Naive thymus-derived CD4-positive, alpha-beta T cell (primary cell): ENCODE measurements at regions of chr3 and their contacts with region 1.

Region 1: GRCh38 chr3:69161587-69162307 is 39.4 kb upstream of the LMOD3 start:
- DNase-seq: peak in 7 of 9 donors; percentile 22 to 62 (median 55)
- ATAC-seq: peak; percentile 84
- H3K4me3 ChIP-seq: no peak overlapping the region
- H3K4me3 Mint-ChIP-seq: no peak overlapping the region
- H3K27ac ChIP-seq: no peak overlapping the region
- H3K27ac Mint-ChIP-seq: no peak overlapping the region
- H3K4me1 ChIP-seq: no peaks in the 10 kb centered on the region
- H3K4me1 Mint-ChIP-seq: peaks cover 0 to 15% (median 0%) of the 10 kb centered on the region in 7 donors
- H3K27me3 ChIP-seq: no peaks in the 10 kb centered on the region
- H3K27me3 Mint-ChIP-seq: peaks cover 0 to 12% (median 0%) of the 10 kb centered on the region in 5 donors

Region 2: DNA sequence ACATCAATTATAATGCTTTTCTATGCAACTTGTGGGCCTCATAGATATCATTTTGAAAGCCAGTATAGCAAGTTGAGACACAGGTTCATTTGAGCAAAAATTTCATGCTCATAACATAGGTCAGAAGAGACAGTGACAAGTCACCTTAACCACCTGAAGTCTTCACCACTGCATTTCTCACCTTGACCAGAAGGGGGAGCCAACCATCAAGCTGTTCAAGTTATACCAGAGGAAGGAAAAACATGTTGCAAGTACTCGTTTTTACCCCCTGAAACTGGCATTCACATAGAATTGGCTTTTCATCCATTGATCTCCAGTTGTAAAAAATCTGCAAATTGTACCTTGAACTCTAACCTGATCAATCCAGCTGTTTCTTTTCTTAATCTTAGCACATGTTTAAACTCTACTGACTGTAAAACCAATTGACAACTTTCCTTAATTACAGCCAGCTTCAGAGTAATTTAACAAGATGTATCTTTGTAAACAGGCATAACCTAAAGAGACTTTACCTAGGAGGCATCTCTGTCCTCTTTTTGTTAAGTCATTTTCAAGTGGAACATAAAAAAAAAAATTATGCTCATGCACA is 40.8 kb before region 1 on chr3:
- CTCF ChIA-PET with region 1: interaction called, 12 read pairs
- POLR2A ChIA-PET with region 1: no interaction called
- intact Hi-C with region 1: loop called (anchors 1 to 2 kb)
- DNase-seq: peak; percentile 35 to 85 (median 78)
- ATAC-seq: peak; percentile 94
- H3K4me3 ChIP-seq: no peak overlapping the region
- H3K4me3 Mint-ChIP-seq: peak overlapping the region in 1 of 10 donors; percentile 16
- H3K27ac ChIP-seq: no peak overlapping the region
- H3K27ac Mint-ChIP-seq: peak overlapping the region in 1 of 9 donors; percentile 31
- H3K4me1 ChIP-seq: no peaks in the 10 kb centered on the region
- H3K4me1 Mint-ChIP-seq: peaks cover 1 to 10% (median 6%) of the 10 kb centered on the region in 7 donors
- H3K27me3 ChIP-seq: no peaks in the 10 kb centered on the region
- H3K27me3 Mint-ChIP-seq: peaks cover 0 to 7% (median 4%) of the 10 kb centered on the region in 5 donors

Region 3: DNA sequence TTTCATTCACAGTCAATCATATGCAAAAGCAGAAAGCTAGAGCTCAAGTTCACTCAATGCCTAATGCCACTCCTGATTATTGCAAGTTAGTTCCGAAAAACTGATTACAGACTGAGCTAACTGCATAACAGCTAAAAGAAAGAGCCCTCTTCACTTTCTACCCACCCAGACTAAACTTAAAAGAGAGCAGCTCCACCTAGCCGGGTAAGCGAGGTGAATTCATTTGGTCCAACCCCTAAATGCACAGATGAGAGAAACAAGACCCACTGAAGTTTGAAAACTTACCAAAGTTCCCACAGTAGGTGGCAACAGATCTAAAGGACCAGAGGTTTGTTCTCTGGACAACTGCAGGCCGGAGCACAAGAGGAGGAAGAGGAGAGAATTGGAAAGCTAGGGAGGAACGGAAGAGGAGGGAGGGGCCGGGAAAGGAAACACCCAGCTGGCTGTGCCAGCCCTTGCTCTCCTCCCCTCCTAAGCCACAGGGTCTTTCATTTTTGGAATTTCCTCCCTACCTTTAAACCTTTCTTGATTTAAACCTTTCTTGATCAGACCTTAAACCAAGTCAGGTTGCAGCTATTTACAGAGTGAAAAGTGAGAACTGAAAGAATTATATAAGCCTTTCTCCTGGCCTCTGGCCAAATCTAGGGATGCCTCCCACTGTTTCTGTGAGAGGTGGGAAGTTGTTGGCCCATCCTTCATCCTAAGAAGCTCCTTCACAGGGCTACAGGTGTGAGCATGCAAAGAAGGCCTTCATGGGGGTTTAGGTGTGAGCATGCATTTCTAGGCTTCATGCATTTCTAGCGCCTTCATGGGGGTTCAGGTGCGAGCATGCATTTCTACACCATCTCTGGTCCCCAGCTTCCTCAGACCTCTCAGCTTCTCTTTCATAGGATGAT is 75.3 kb after region 1 on chr3:
- CTCF ChIA-PET with region 1: interaction called, 11 read pairs
- POLR2A ChIA-PET with region 1: interaction called, 3 read pairs
- intact Hi-C with region 1: loop called in 1 of 2 experiments (anchors 1 kb)
- DNase-seq: peak in 1 of 9 donors; percentile 5
- ATAC-seq: no peak
- H3K4me3 ChIP-seq: no peak overlapping the region
- H3K4me3 Mint-ChIP-seq: peak overlapping the region in 8 of 10 donors; percentile 58 to 78 (median 68)
- H3K27ac ChIP-seq: no peak overlapping the region
- H3K27ac Mint-ChIP-seq: peak overlapping the region in 8 of 9 donors; percentile 1 to 80 (median 42)
- H3K4me1 ChIP-seq: peaks cover 5 to 17% of the 10 kb centered on the region in 2 donors
- H3K4me1 Mint-ChIP-seq: peaks cover 9 to 33% (median 19%) of the 10 kb centered on the region in 7 donors
- H3K27me3 ChIP-seq: no peaks in the 10 kb centered on the region
- H3K27me3 Mint-ChIP-seq: no peaks in the 10 kb centered on the region

Region 4: DNA sequence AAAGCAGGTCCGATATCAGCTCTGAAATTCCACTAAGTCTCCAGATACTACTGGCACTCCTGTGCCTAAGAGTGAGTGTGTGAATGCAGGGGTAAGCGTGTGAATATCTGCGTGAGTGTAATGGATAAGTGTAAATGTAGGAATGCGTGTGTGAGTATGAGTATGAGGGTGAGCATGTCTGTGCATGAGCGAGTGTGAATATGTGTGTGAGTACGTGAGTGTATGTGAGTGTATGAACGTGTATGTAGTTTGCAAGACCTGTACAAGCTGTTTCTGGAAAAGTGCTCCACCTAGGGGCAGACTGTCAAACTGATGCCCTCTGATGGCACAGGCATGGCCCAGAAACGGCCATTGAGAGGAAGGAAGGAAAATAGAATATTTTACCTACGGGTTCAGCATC is 248.5 kb after region 1 on chr3:
- CTCF ChIA-PET with region 1: interaction called, 7 read pairs
- POLR2A ChIA-PET with region 1: no interaction called
- intact Hi-C with region 1: loop called (anchors 1 kb)
- DNase-seq: peak; percentile 9 to 60 (median 46)
- ATAC-seq: peak; percentile 93
- H3K4me3 ChIP-seq: no peak overlapping the region
- H3K4me3 Mint-ChIP-seq: no peak overlapping the region
- H3K27ac ChIP-seq: no peak overlapping the region
- H3K27ac Mint-ChIP-seq: no peak overlapping the region
- H3K4me1 ChIP-seq: no peaks in the 10 kb centered on the region
- H3K4me1 Mint-ChIP-seq: peaks cover 1 to 10% (median 5%) of the 10 kb centered on the region in 7 donors
- H3K27me3 ChIP-seq: no peaks in the 10 kb centered on the region
- H3K27me3 Mint-ChIP-seq: peaks cover 0 to 3% (median 0%) of the 10 kb centered on the region in 5 donors

Region 5: DNA sequence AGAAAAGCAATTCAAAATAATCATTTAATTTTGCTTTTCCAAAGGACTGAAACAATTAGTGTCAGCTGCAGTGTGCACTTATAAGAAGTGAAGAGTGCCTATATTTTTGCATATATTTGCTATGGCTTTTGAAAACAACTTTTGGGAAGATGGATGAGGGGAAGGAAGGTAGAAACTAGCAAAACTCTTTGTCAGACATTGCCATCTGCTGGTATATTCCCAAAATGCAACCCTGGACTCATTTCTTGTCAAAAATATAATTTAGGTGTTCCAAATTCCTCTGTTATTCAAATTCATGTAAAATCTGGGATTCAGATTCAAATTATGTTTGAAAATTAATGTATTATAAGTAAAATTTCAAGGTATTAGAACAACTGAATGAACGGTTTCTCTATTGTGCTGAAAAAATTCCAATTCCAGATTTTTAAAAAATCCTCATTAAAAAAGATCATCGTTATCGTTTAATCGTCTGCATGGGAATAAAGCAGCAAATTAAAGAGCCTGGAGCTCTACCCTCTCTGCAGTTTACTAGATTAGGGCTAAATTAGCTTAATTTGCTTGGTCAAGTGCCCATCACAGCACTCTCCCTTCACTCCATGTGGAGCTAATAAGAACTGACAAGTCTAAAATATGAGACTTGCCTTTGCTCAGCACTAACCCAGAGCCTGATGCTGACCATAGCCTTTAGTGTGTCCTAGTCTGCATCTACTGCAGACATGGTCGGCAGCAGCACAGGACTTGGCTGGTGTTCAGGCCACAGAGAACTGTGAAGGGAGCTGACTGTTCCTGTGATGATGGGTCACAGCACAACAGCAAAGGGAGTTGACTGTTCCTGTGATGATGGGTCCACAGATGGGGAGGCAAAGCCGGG is 509.6 kb after region 1 on chr3:
- CTCF ChIA-PET with region 1: no interaction called
- POLR2A ChIA-PET with region 1: no interaction called
- intact Hi-C with region 1: loop called in 1 of 2 experiments (anchors 1 kb)
- DNase-seq: no peak
- ATAC-seq: no peak
- H3K4me3 ChIP-seq: no peak overlapping the region
- H3K4me3 Mint-ChIP-seq: no peak overlapping the region
- H3K27ac ChIP-seq: no peak overlapping the region
- H3K27ac Mint-ChIP-seq: no peak overlapping the region
- H3K4me1 ChIP-seq: no peaks in the 10 kb centered on the region
- H3K4me1 Mint-ChIP-seq: no peaks in the 10 kb centered on the region
- H3K27me3 ChIP-seq: no peaks in the 10 kb centered on the region
- H3K27me3 Mint-ChIP-seq: peaks cover 0 to 22% (median 4%) of the 10 kb centered on the region in 5 donors